RWPE1 (cell line): ENCODE measurements at regions of chr14 and their contacts with region 1.

Region 1: GRCh38 chr14:68788275-68788995 is 4.4 kb downstream of the ZFP36L1 start:
- DNase-seq: no peak
- H3K27ac ChIP-seq: peak overlapping the region; percentile 99
- CTCF ChIP-seq: no peak

Region 2: GRCh38 chr14:68414121-68414520 is 374.3 kb before region 1 on chr14:
- CTCF ChIA-PET with region 1: interaction called, 10 read pairs
- POLR2A ChIA-PET with region 1: no interaction called
- DNase-seq: no peak
- H3K27ac ChIP-seq: no peak overlapping the region
- CTCF ChIP-seq: no peak

Region 3: GRCh38 chr14:68884031-68885030 is 95.9 kb after region 1 on chr14:
- CTCF ChIA-PET with region 1: no interaction called
- POLR2A ChIA-PET with region 1: no interaction called
- DNase-seq: peak; percentile 62
- H3K27ac ChIP-seq: peak overlapping the region; percentile 96
- CTCF ChIP-seq: no peak